Heart left ventricle (tissue), 16 donors: ENCODE measurements at regions of chr17 and their contacts with region 1.

Region 1: DNA sequence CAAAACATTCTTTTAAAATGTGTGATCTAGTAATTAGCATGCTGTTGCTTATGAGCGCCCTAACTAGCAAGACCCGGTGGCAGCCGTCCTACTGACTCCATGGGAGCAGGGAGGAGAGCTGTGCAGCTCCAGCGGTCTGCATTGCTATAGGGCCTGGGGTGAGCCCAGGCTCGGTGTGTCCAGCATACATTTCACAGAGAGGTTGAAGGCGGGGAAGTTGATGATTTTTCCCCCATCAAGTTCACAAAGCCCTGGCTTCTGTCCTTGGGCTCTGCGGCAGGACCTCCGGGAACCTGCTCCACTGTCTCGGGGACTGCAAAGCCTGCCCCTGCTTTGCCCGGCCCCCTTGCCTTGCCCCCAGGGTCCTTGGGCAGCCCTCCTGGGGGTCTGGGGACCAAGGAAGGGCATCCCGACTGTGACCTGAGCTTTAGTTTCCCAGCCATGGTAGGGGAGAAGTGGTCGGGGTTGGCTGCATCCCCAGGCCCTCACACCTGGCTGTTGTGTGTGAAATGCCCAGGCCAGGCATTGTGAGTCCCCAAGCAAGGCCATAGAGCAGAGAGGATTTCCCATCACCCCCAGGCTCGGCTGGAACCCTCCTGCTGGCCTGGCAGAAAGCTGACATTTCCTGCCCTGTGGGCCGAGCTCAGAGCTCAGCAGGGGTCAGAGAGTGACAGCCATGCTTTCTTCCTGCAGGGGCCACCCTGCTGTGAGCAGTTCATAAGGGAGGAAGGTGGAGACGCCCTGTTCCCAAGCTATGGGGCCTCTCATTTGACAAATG is 24.8 kb downstream of the KCNJ12 start:
- DNase-seq: no peak
- ATAC-seq: no peak
- H3K4me3 ChIP-seq: no peak overlapping the region
- H3K27ac ChIP-seq: no peak overlapping the region
- H3K4me1 ChIP-seq: peaks cover 0 to 41% (median 11%) of the 10 kb centered on the region in 12 donors
- H3K27me3 ChIP-seq: no peaks in the 10 kb centered on the region
- CTCF ChIP-seq: no peak
- POLR2A ChIP-seq: no peak

Region 2: GRCh38 chr17:21689604-21690003 is 288.6 kb after region 1 on chr17:
- intact Hi-C with region 1: loop called in 1 of 10 experiments (anchors 5 kb)
- DNase-seq: peak in 3 of 5 donors; percentile 50 to 66 (median 53)
- ATAC-seq: peak in 3 of 4 donors; percentile 55 to 67 (median 55)
- H3K4me3 ChIP-seq: no peak overlapping the region
- H3K27ac ChIP-seq: no peak overlapping the region
- H3K4me1 ChIP-seq: no peaks in the 10 kb centered on the region
- H3K27me3 ChIP-seq: peaks cover 0 to 11% (median 0%) of the 10 kb centered on the region in 9 donors
- CTCF ChIP-seq: no peak
- POLR2A ChIP-seq: no peak